Naive thymus-derived CD4-positive, alpha-beta T cell (primary cell): ENCODE measurements at regions of chr14 and their contacts with region 1.

Region 1: DNA sequence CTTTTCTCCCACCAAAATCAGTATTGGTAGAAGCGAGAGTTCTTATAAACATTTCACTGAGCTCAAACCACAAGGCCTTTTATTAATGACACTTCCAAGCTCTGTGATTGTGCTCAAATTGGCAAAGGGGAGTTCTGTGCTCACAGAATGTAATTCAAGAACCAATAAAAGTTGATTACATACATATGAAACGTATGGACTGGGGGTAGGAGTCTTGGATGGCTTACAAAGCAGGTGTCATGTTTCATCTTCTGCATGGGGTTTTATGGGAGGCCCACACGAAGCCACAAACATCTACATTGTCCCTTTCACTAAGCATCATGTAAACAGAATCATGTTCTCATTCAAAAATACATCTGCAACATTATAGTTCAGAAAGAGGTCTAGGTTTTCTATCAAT is 828.3 kb downstream of the VRK1 start:
- DNase-seq: no peak
- ATAC-seq: no peak
- H3K4me3 ChIP-seq: no peak overlapping the region
- H3K4me3 Mint-ChIP-seq: no peak overlapping the region
- H3K27ac ChIP-seq: no peak overlapping the region
- H3K27ac Mint-ChIP-seq: peak overlapping the region in 3 of 9 donors; percentile 10 to 42 (median 38)
- H3K4me1 ChIP-seq: peaks cover 8 to 10% of the 10 kb centered on the region in 2 donors
- H3K4me1 Mint-ChIP-seq: peaks cover 18 to 50% (median 34%) of the 10 kb centered on the region in 7 donors
- H3K27me3 ChIP-seq: no peaks in the 10 kb centered on the region
- H3K27me3 Mint-ChIP-seq: peaks cover 0 to 9% (median 0%) of the 10 kb centered on the region in 5 donors

Region 2: DNA sequence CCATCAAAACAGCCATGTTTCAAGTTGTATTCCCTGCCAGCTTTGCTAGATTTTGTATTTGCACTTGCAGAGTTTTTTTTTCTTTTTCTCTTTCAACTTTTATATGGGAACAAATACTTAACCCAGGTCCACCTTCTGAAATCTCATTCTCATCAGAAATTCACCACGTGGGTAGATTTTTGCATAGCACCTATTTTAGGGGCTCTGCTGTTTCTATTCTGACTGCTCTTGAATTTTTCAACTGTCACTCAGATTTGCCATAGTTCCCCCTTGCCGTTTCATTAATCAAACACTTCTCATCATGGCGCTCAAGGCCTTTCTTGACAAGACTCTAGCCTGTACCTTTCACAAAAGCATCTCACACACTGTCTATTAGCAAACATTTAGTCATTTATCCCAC is 61.1 kb before region 1 on chr14:
- CTCF ChIA-PET with region 1: no interaction called
- POLR2A ChIA-PET with region 1: no interaction called
- intact Hi-C with region 1: no loop called
- DNase-seq: no peak
- ATAC-seq: no peak
- H3K4me3 ChIP-seq: no peak overlapping the region
- H3K4me3 Mint-ChIP-seq: no peak overlapping the region
- H3K27ac ChIP-seq: no peak overlapping the region
- H3K27ac Mint-ChIP-seq: peak overlapping the region in 1 of 9 donors; percentile 81
- H3K4me1 ChIP-seq: no peaks in the 10 kb centered on the region
- H3K4me1 Mint-ChIP-seq: peaks cover 0 to 6% (median 0%) of the 10 kb centered on the region in 7 donors
- H3K27me3 ChIP-seq: no peaks in the 10 kb centered on the region
- H3K27me3 Mint-ChIP-seq: peaks cover 0 to 10% (median 0%) of the 10 kb centered on the region in 5 donors

Region 3: GRCh38 chr14:97788364-97788763 is 162.9 kb after region 1 on chr14:
- CTCF ChIA-PET with region 1: no interaction called
- POLR2A ChIA-PET with region 1: no interaction called
- intact Hi-C with region 1: loop called in 1 of 2 experiments (anchors 10 kb)
- DNase-seq: no peak
- ATAC-seq: no peak
- H3K4me3 ChIP-seq: no peak overlapping the region
- H3K4me3 Mint-ChIP-seq: no peak overlapping the region
- H3K27ac ChIP-seq: no peak overlapping the region
- H3K27ac Mint-ChIP-seq: peak overlapping the region in 2 of 9 donors; percentile 16 to 21
- H3K4me1 ChIP-seq: peaks cover 0 to 13% of the 10 kb centered on the region in 2 donors
- H3K4me1 Mint-ChIP-seq: peaks cover 8 to 38% (median 34%) of the 10 kb centered on the region in 7 donors
- H3K27me3 ChIP-seq: no peaks in the 10 kb centered on the region
- H3K27me3 Mint-ChIP-seq: no peaks in the 10 kb centered on the region

Region 4: DNA sequence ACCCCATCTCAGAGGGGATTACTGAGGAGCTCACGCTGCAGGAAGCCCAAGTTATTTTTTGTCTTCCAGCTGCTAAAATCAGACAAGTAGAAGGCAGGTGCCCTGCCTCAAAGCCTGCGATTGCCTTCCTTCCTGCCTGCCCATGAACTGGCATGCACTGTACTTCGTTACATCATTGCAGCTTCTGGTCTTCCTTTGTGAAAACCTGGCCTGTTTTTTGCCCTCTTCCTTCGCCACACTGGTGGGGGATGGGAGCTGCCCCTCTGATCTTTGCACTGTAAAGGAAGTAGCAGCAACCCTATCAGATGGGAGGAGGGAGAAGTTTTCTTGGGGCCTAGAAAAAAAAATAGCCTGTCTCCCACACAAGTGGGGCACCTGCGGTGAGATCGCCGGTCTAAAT is 547.8 kb after region 1 on chr14:
- CTCF ChIA-PET with region 1: no interaction called
- POLR2A ChIA-PET with region 1: no interaction called
- intact Hi-C with region 1: no loop called
- DNase-seq: peak in 7 of 9 donors; percentile 71 to 84 (median 82)
- ATAC-seq: peak; percentile 78
- H3K4me3 ChIP-seq: peak overlapping the region; percentile 33
- H3K4me3 Mint-ChIP-seq: peak overlapping the region; percentile 74 to 90 (median 84)
- H3K27ac ChIP-seq: peak overlapping the region; percentile 81
- H3K27ac Mint-ChIP-seq: peak overlapping the region; percentile 89 to 100 (median 97)
- H3K4me1 ChIP-seq: peaks cover 100% of the 10 kb centered on the region in 2 donors
- H3K4me1 Mint-ChIP-seq: peaks cover 59 to 100% (median 99%) of the 10 kb centered on the region in 7 donors
- H3K27me3 ChIP-seq: no peaks in the 10 kb centered on the region
- H3K27me3 Mint-ChIP-seq: no peaks in the 10 kb centered on the region